GM18951 (cell line): ENCODE measurements at regions of chr3 and their contacts with region 1.

Region 1: DNA sequence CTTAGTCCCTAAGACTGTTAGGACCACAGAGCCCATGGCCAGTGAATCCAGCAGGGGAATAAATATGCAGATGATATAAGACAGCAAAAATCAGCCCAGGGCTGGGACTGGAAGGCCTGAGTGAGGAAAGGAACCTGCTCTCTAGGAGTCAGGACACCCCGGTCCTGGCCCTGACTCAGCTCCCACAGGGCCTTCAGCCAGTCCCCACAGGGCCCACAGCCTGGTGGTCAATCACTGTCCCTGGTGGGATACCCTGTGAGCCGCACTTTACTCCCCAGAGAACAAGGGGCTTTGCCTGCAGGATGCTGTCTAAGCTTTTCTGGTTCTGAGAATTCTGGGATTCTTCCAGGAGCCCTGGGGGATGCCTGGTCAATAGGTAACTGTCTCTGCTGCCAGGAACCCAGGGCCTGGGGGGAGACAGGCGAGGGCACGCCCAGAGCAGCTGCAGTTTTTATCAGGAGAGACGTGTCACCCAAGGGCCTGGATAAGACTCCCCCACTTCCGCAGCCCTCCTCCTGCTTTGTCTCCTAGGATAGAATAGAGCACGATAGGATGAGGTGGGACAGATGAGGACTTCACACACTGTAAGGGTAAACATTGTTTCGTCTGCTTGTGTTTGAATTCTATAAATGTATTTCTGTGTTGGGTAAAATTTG is 49.5 kb upstream of the MCF2L2 start:
- POLR2A ChIP-seq: no peak

Region 2: GRCh38 chr3:183766745-183767606 is 289.0 kb after region 1 on chr3:
- in situ Hi-C with region 1: loop called (anchors 10 kb)
- POLR2A ChIP-seq: no peak